ENCODE measurements at regions of chr16 and their contacts with region 1.

Region 1: DNA sequence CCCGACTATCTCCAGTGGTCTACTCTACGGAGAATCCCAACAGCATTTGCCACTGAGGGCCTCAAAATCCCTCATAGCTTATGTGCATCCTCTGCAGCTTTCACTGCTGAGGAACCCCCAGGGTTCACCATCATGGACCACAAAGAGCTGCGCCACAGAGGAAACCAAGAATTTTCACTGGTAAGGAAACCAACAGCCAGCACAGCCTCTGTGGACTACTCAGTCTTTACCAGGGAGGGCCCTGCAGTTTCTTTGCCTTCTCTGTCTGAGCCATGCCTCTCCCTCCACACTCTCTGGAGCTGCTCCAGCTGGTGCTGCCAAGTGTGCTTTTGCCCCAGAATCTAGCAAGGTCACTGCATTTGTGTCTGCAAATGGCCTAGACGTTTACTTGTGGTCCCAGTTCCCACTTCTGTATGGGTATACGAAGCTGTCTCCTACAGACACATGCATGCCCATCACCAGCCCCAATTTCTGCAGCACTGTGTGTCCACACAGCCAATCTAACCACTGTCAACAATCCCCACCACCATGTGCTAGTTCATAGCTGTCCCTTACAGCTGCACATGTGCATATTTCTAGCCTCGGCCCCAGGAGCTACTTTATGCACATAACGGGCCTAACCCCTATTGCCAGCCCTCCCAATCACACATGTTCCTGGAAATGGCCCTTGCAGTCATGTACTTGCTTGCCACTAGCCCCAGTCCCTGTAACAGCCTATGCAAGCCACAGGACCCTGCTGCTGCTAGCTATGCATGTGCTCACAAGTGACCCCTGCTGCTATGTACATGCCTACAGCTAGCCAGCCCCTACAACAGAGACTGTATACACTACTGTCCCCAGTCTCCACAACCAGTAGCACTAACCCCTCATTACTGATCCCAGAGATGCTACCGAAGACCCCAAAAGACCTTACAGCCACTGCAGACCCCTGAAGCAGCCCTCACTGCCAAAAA is 1437.4 kb downstream of the CDH11 start:
- DNase-seq: no peak
- ATAC-seq: no peak
- H3K4me3 ChIP-seq: no peak overlapping the region
- H3K27ac ChIP-seq: no peak overlapping the region
- H3K4me1 ChIP-seq: no peaks in the 10 kb centered on the region
- H3K27me3 ChIP-seq: no peaks in the 10 kb centered on the region
- CTCF ChIP-seq: no peak
- POLR2A ChIP-seq: no peak
- RAD21 ChIP-seq: no peak

Region 2: DNA sequence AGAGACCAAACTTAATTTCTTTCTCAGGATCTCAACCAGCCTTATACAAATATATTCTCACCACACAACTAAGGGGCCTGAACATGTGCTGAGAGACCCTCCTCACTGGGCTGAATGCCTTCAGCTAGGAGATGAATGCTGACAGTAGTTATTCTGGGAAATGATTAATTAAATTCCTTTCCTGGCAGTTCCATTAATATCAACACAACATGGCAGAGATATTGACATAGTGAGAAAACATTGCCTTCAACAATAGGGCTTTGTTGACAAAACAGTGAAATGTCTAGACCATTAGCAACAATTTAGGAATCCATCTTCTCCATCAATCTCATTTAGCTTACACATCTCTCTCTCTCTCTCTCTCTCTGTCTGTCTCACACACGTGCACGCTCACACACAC is 867.4 kb before region 1 on chr16:
- CTCF ChIA-PET with region 1: no interaction called
- POLR2A ChIA-PET with region 1: no interaction called
- RAD21 ChIA-PET with region 1: no interaction called
- intact Hi-C with region 1: no loop called
- DNase-seq: no peak
- ATAC-seq: no peak
- H3K4me3 ChIP-seq: no peak overlapping the region
- H3K27ac ChIP-seq: no peak overlapping the region
- H3K4me1 ChIP-seq: no peaks in the 10 kb centered on the region
- H3K27me3 ChIP-seq: no peaks in the 10 kb centered on the region
- CTCF ChIP-seq: no peak
- POLR2A ChIP-seq: no peak
- RAD21 ChIP-seq: no peak

Region 3: GRCh38 chr16:63702984-63703590 is 18.7 kb after region 1 on chr16:
- CTCF ChIA-PET with region 1: no interaction called
- POLR2A ChIA-PET with region 1: no interaction called
- RAD21 ChIA-PET with region 1: no interaction called
- intact Hi-C with region 1: no loop called
- DNase-seq: no peak
- ATAC-seq: no peak
- H3K4me3 ChIP-seq: no peak overlapping the region
- H3K27ac ChIP-seq: no peak overlapping the region
- H3K4me1 ChIP-seq: no peaks in the 10 kb centered on the region
- H3K27me3 ChIP-seq: no peaks in the 10 kb centered on the region
- CTCF ChIP-seq: no peak
- POLR2A ChIP-seq: no peak
- RAD21 ChIP-seq: no peak

Region 4: DNA sequence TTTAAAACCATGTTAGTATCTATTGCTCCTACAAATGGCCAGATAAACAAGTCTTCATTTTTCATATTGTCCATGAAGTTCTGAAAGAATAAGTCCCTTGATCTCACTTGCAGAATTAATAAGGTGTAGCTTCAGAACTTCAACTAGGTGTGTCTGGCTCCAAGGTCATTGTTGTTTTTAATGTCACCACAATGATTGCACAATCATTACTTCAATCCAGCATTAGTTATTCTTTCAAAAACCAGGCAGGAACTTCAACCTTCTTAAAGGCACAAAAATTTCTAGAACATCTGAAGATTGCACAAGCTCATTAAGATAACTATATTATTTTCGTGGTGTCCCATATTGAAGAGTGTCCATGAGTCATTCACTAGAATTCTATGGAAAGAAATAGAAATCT is 51.0 kb after region 1 on chr16:
- CTCF ChIA-PET with region 1: no interaction called
- POLR2A ChIA-PET with region 1: no interaction called
- RAD21 ChIA-PET with region 1: no interaction called
- intact Hi-C with region 1: no loop called
- DNase-seq: no peak
- ATAC-seq: no peak
- H3K4me3 ChIP-seq: no peak overlapping the region
- H3K27ac ChIP-seq: no peak overlapping the region
- H3K4me1 ChIP-seq: no peaks in the 10 kb centered on the region
- H3K27me3 ChIP-seq: no peaks in the 10 kb centered on the region
- CTCF ChIP-seq: no peak
- POLR2A ChIP-seq: no peak
- RAD21 ChIP-seq: no peak

Region 5: DNA sequence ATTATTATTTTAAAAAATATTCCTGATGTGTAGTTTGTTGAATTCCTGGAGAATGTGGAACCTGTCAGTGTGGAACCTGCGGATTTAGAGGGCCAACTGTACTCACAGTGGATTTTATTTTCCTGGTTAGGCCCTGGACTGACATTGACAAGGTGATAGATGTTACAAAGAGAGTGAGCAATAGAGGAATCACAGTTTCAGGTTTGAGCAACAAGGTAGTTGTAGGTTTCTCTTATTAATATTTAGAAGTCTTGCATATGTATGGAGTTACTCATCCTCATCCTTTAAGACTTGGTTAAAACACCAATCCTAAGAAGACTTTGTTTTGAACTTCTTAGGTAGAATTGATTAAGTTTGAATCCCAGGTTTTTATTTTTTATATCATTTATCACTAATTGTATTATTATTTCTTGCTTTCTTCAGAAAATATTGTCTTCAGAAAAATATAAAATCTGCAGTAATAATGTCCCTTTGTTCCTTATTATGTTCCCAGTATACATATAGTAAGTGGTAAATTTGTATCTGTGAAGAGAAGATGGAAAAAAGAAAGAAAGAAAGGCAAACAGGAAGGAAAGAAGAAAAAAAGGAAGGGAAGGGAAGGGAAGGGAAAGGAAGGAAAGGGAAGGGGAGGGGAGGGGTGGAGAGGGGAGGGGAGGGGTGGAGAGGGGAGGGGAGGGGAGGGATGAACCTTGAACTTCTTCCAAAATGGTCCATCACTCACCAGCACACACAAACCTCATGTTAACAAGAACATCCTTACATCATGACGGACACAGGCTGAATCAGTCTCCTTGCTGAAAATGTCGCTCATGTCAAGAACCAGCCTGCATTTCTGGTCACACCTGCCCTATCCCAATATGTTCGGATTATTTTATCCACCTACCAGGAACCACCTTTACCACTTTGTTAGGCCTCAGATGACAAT is 570.3 kb after region 1 on chr16:
- CTCF ChIA-PET with region 1: no interaction called
- POLR2A ChIA-PET with region 1: no interaction called
- RAD21 ChIA-PET with region 1: no interaction called
- intact Hi-C with region 1: loop called (anchors 5 kb)
- DNase-seq: no peak
- ATAC-seq: no peak
- H3K4me3 ChIP-seq: no peak overlapping the region
- H3K27ac ChIP-seq: no peak overlapping the region
- H3K4me1 ChIP-seq: no peaks in the 10 kb centered on the region
- H3K27me3 ChIP-seq: no peaks in the 10 kb centered on the region
- CTCF ChIP-seq: no peak
- POLR2A ChIP-seq: no peak
- RAD21 ChIP-seq: no peak